Endothelial cell of umbilical vein (primary cell): ENCODE measurements at regions of chr21 and their contacts with region 1.

Region 1: GRCh38 chr21:18522181-18522972 is 118.8 kb upstream of the TMPRSS15 start:
- DNase-seq: peak; percentile 26
- H3K4me3 ChIP-seq: no peak overlapping the region
- H3K27ac ChIP-seq: no peak overlapping the region
- H3K4me1 ChIP-seq: no peaks in the 10 kb centered on the region
- H3K27me3 ChIP-seq: no peaks in the 10 kb centered on the region
- CTCF ChIP-seq: peak in 1 of 2 donors; percentile 8
- POLR2A ChIP-seq: no peak

Region 2: DNA sequence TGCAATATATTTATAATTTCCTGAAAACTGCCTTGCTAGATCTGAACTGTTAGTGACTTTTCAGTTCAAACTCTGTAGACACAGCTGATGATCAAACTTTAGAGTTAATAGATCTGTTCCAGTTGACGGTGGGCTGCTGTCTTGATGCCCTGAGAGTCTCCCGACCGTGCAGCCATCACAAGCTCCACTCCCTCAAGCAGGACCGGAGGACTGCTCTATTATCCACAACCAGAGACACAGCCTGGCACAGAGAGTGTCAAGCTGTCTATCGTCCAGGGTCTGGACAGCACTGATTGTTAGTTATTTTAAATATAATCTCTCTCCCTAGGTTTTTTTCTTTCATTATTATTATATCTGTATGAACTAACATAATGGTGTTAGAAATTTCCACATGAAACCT is 269.7 kb before region 1 on chr21:
- CTCF ChIA-PET with region 1: no interaction called
- POLR2A ChIA-PET with region 1: no interaction called
- dilution Hi-C with region 1: no loop called
- intact Hi-C with region 1: no loop called
- DNase-seq: no peak
- H3K4me3 ChIP-seq: no peak overlapping the region
- H3K27ac ChIP-seq: no peak overlapping the region
- H3K4me1 ChIP-seq: no peaks in the 10 kb centered on the region
- H3K27me3 ChIP-seq: no peaks in the 10 kb centered on the region
- CTCF ChIP-seq: no peak
- POLR2A ChIP-seq: no peak

Region 3: GRCh38 chr21:18716575-18717138 is 194.3 kb after region 1 on chr21:
- CTCF ChIA-PET with region 1: no interaction called
- POLR2A ChIA-PET with region 1: no interaction called
- dilution Hi-C with region 1: no loop called
- intact Hi-C with region 1: loop called (anchors 10 kb)
- DNase-seq: peak; percentile 54
- H3K4me3 ChIP-seq: no peak overlapping the region
- H3K27ac ChIP-seq: no peak overlapping the region
- H3K4me1 ChIP-seq: peaks cover 4% of the 10 kb centered on the region
- H3K27me3 ChIP-seq: no peaks in the 10 kb centered on the region
- CTCF ChIP-seq: no peak
- POLR2A ChIP-seq: no peak

Region 4: GRCh38 chr21:18801468-18801867 is 279.1 kb after region 1 on chr21:
- CTCF ChIA-PET with region 1: no interaction called
- POLR2A ChIA-PET with region 1: no interaction called
- dilution Hi-C with region 1: no loop called
- intact Hi-C with region 1: loop called (anchors 2 kb)
- DNase-seq: peak; percentile 30
- H3K4me3 ChIP-seq: no peak overlapping the region
- H3K27ac ChIP-seq: no peak overlapping the region
- H3K4me1 ChIP-seq: no peaks in the 10 kb centered on the region
- H3K27me3 ChIP-seq: no peaks in the 10 kb centered on the region
- CTCF ChIP-seq: peak in 1 of 2 donors; percentile 15
- POLR2A ChIP-seq: no peak